ENCODE measurements at regions of chr15 and their contacts with region 1.

Region 1: GRCh38 chr15:57675481-57676181 is 30.9 kb upstream of the POLR2M start:
- DNase-seq: no peak
- ATAC-seq: no peak
- H3K4me3 ChIP-seq: no peak overlapping the region
- H3K27ac ChIP-seq: no peak overlapping the region
- H3K4me1 ChIP-seq: no peaks in the 10 kb centered on the region
- H3K27me3 ChIP-seq: no peaks in the 10 kb centered on the region
- CTCF ChIP-seq: no peak
- POLR2A ChIP-seq: no peak

Region 2: GRCh38 chr15:57570994-57571393 is 104.6 kb before region 1 on chr15:
- intact Hi-C with region 1: no loop called
- DNase-seq: no peak
- ATAC-seq: peak in 1 of 4 donors; percentile 49
- H3K4me3 ChIP-seq: no peak overlapping the region
- H3K27ac ChIP-seq: no peak overlapping the region
- H3K4me1 ChIP-seq: no peaks in the 10 kb centered on the region
- H3K27me3 ChIP-seq: no peaks in the 10 kb centered on the region
- CTCF ChIP-seq: no peak
- POLR2A ChIP-seq: no peak

Region 3: GRCh38 chr15:57720867-57721266 is 45.2 kb after region 1 on chr15:
- intact Hi-C with region 1: loop called in 1 of 2 experiments (anchors 10 kb)
- DNase-seq: no peak
- ATAC-seq: no peak
- H3K4me3 ChIP-seq: no peak overlapping the region
- H3K27ac ChIP-seq: no peak overlapping the region
- H3K4me1 ChIP-seq: no peaks in the 10 kb centered on the region
- H3K27me3 ChIP-seq: no peaks in the 10 kb centered on the region
- CTCF ChIP-seq: no peak
- POLR2A ChIP-seq: no peak

Measured in right lobe of liver (tissue), 6 donors.